Activated CD8-positive, alpha-beta T cell treated with anti-CD3 and anti-CD28 coated beads for 36 hours (primary cell): ENCODE measurements at regions of chr17 and their contacts with region 1.

Region 1: GRCh38 chr17:18217412-18218015 is 7.9 kb upstream of the LLGL1 start:
- DNase-seq: peak; percentile 86
- ATAC-seq: peak; percentile 95
- H3K4me3 Mint-ChIP-seq: no peak overlapping the region
- H3K27ac Mint-ChIP-seq: no peak overlapping the region
- H3K4me1 Mint-ChIP-seq: no peaks in the 10 kb centered on the region
- H3K27me3 Mint-ChIP-seq: no peaks in the 10 kb centered on the region
- CTCF ChIP-seq: peak; percentile 94

Region 2: DNA sequence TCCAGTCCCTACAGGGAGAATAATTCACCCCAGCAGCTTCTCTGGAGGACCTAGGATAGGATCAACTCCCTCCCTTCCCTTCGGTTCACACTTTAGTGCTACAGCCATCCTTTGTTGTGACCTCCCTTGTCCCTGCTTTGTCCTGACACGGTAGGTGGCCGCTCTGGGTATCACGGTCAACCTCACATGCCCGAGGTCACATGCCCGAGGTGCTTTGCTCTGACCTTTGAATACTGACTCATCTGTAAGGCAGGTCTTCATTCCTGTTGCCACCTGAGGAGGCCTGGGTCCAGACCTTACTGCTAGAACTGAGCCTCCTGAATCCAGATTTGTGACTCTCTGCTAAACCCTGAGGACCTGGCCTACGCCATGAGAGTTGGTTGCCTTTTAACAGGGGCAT is 14.2 kb before region 1 on chr17:
- CTCF ChIA-PET with region 1: interaction called, 12 read pairs
- POLR2A ChIA-PET with region 1: interaction called, 3 read pairs
- intact Hi-C with region 1: no loop called
- DNase-seq: no peak
- ATAC-seq: peak; percentile 17
- H3K4me3 Mint-ChIP-seq: no peak overlapping the region
- H3K27ac Mint-ChIP-seq: peak overlapping the region; percentile 9
- H3K4me1 Mint-ChIP-seq: peaks cover 16% of the 10 kb centered on the region
- H3K27me3 Mint-ChIP-seq: no peaks in the 10 kb centered on the region
- CTCF ChIP-seq: no peak

Region 3: GRCh38 chr17:18231164-18231563 is 13.7 kb after region 1 on chr17:
- CTCF ChIA-PET with region 1: interaction called, 10 read pairs
- POLR2A ChIA-PET with region 1: no interaction called
- intact Hi-C with region 1: no loop called
- DNase-seq: no peak
- ATAC-seq: no peak
- H3K4me3 Mint-ChIP-seq: no peak overlapping the region
- H3K27ac Mint-ChIP-seq: no peak overlapping the region
- H3K4me1 Mint-ChIP-seq: peaks cover 19% of the 10 kb centered on the region
- H3K27me3 Mint-ChIP-seq: no peaks in the 10 kb centered on the region
- CTCF ChIP-seq: no peak